WTC11 (cell line): ENCODE measurements at regions of chr11 and their contacts with region 1.

Region 1: GRCh38 chr11:88016392-88017170 is 158.7 kb downstream of the RAB38 start:
- DNase-seq: peak; percentile 68
- ATAC-seq: peak; percentile 90
- H3K4me3 Mint-ChIP-seq: no peak overlapping the region
- H3K27ac Mint-ChIP-seq: no peak overlapping the region
- H3K4me1 Mint-ChIP-seq: peaks cover 11% of the 10 kb centered on the region
- H3K27me3 Mint-ChIP-seq: no peaks in the 10 kb centered on the region
- CTCF ChIP-seq: peak; percentile 71

Region 2: DNA sequence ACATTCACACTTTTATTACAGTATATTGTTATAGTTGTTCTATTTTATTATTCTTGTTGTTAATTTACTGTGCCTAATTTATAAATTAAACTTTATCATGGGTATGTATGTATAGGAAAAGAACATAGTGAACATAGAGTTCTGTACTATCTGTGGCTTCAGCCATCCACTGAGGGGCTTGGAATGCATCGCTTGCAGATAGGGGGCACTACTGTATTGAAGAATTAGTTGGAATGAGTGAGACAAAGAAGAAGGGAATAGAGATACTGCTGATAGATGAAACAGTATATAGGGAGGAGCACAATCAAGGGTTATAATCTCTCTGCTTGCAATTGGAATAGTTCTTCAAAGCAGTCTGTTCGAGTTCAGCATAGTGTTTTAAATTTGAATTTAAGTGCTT is 273.6 kb before region 1 on chr11:
- CTCF ChIA-PET with region 1: no interaction called
- POLR2A ChIA-PET with region 1: no interaction called
- DNase-seq: peak; percentile 16
- ATAC-seq: peak; percentile 95
- H3K4me3 Mint-ChIP-seq: no peak overlapping the region
- H3K27ac Mint-ChIP-seq: no peak overlapping the region
- H3K4me1 Mint-ChIP-seq: no peaks in the 10 kb centered on the region
- H3K27me3 Mint-ChIP-seq: no peaks in the 10 kb centered on the region
- CTCF ChIP-seq: no peak

Region 3: GRCh38 chr11:88103337-88104206 is 87.0 kb after region 1 on chr11:
- CTCF ChIA-PET with region 1: interaction called, 13 read pairs
- POLR2A ChIA-PET with region 1: no interaction called
- DNase-seq: peak; percentile 74
- ATAC-seq: peak; percentile 100
- H3K4me3 Mint-ChIP-seq: no peak overlapping the region
- H3K27ac Mint-ChIP-seq: no peak overlapping the region; the same call in 1 of the 2 replicates
- H3K4me1 Mint-ChIP-seq: peaks cover 11% of the 10 kb centered on the region
- H3K27me3 Mint-ChIP-seq: no peaks in the 10 kb centered on the region
- CTCF ChIP-seq: peak; percentile 59; the same call in 1 of the 2 replicates

Region 4: GRCh38 chr11:88543902-88544655 is 527.5 kb after region 1 on chr11:
- CTCF ChIA-PET with region 1: interaction called, 14 read pairs
- POLR2A ChIA-PET with region 1: no interaction called
- DNase-seq: peak; percentile 85
- ATAC-seq: peak; percentile 100
- H3K4me3 Mint-ChIP-seq: no peak overlapping the region
- H3K27ac Mint-ChIP-seq: no peak overlapping the region
- H3K4me1 Mint-ChIP-seq: peaks cover 5% of the 10 kb centered on the region
- H3K27me3 Mint-ChIP-seq: no peaks in the 10 kb centered on the region
- CTCF ChIP-seq: peak; percentile 87

Region 5: GRCh38 chr11:88552377-88553062 is 535.9 kb after region 1 on chr11:
- CTCF ChIA-PET with region 1: interaction called, 23 read pairs
- POLR2A ChIA-PET with region 1: no interaction called
- DNase-seq: peak; percentile 73
- ATAC-seq: peak; percentile 98
- H3K4me3 Mint-ChIP-seq: no peak overlapping the region
- H3K27ac Mint-ChIP-seq: no peak overlapping the region
- H3K4me1 Mint-ChIP-seq: peaks cover 15% of the 10 kb centered on the region
- H3K27me3 Mint-ChIP-seq: no peaks in the 10 kb centered on the region
- CTCF ChIP-seq: peak; percentile 68